Endothelial cell of umbilical vein (primary cell): ENCODE measurements at regions of chr15 and their contacts with region 1.

Region 1: GRCh38 chr15:71103102-71103676 is 12.1 kb upstream of the THSD4 start:
- DNase-seq: peak; percentile 38
- H3K4me3 ChIP-seq: no peak overlapping the region
- H3K27ac ChIP-seq: no peak overlapping the region
- H3K4me1 ChIP-seq: no peaks in the 10 kb centered on the region
- H3K27me3 ChIP-seq: no peaks in the 10 kb centered on the region
- CTCF ChIP-seq: peak; percentile 48 to 78
- POLR2A ChIP-seq: no peak

Region 2: DNA sequence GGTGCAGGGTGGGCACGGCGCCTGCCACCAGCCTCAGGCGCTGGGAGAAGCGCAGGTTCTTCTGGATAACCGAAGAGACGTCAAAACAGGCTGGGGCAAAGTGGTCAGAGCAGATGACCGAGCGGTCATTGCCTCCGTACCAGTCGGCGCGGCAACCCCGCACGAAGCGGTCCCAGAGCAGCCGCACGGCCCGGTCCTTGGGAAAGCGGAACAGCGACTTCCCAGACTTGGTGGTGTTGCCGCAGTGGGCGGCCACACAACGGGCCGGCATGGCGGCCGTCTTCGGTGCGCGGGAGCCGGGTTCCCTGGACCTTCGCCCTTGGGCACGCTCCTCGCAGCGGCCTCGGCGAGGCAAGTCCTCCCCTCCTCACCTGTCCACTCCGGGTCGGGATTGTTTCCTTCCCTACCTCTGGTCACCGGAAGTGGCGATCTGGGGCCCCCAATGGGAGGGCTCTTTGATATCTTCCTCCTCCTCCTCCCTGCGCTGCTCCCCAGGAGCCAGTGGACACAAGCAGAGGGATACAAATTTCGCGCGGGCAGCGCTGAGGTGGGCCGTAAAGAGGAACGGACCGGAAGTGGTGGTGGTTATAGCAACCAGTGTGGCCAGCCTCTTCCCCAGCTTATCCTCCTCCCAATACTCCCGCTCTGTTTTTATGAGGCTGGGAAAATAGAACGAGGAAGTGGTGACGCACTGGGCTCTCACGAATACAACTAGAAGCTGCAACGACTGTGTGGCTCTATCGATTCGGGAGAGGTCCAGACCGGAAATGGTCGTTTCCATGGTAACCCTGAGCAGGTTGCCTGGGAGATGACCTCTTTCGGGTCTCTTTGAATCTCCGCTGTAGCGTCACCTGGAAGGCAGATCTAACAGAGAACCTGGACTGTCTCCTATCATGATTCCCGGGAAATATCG is 210.9 kb before region 1 on chr15 and contains the starts of genes LRRC49 and THAP10:
- CTCF ChIA-PET with region 1: interaction called, 14 read pairs
- POLR2A ChIA-PET with region 1: no interaction called
- dilution Hi-C with region 1: no loop called
- intact Hi-C with region 1: loop called (anchors 2 kb)
- DNase-seq: peak; percentile 98
- H3K4me3 ChIP-seq: peak within 1 kb of the TSS; percentile 47 to 81 (median 69)
- H3K27ac ChIP-seq: peak within 1 kb of the TSS; percentile 86
- H3K4me1 ChIP-seq: peaks cover 17% of the 10 kb centered on the region
- H3K27me3 ChIP-seq: no peaks in the 10 kb centered on the region
- CTCF ChIP-seq: no peak
- POLR2A ChIP-seq: no peak
- total RNA-seq, gene LRRC49: 6.6 and 7.4 TPM in 2 replicates
- total RNA-seq, gene THAP10: 2.7 and 4.0 TPM in 2 replicates

Region 3: GRCh38 chr15:70974004-70974832 is 129.0 kb before region 1 on chr15:
- CTCF ChIA-PET with region 1: interaction called, 34 read pairs
- POLR2A ChIA-PET with region 1: no interaction called
- dilution Hi-C with region 1: no loop called
- intact Hi-C with region 1: loop called (anchors 2 kb)
- DNase-seq: peak; percentile 66
- H3K4me3 ChIP-seq: no peak overlapping the region
- H3K27ac ChIP-seq: no peak overlapping the region
- H3K4me1 ChIP-seq: no peaks in the 10 kb centered on the region
- H3K27me3 ChIP-seq: no peaks in the 10 kb centered on the region
- CTCF ChIP-seq: peak in 1 of 2 donors; percentile 38
- POLR2A ChIP-seq: no peak

Region 4: GRCh38 chr15:71060983-71061382 is 42.2 kb before region 1 on chr15:
- CTCF ChIA-PET with region 1: no interaction called
- POLR2A ChIA-PET with region 1: no interaction called
- dilution Hi-C with region 1: no loop called
- intact Hi-C with region 1: no loop called
- DNase-seq: no peak
- H3K4me3 ChIP-seq: no peak overlapping the region
- H3K27ac ChIP-seq: no peak overlapping the region
- H3K4me1 ChIP-seq: no peaks in the 10 kb centered on the region
- H3K27me3 ChIP-seq: no peaks in the 10 kb centered on the region
- CTCF ChIP-seq: no peak
- POLR2A ChIP-seq: no peak

Region 5: DNA sequence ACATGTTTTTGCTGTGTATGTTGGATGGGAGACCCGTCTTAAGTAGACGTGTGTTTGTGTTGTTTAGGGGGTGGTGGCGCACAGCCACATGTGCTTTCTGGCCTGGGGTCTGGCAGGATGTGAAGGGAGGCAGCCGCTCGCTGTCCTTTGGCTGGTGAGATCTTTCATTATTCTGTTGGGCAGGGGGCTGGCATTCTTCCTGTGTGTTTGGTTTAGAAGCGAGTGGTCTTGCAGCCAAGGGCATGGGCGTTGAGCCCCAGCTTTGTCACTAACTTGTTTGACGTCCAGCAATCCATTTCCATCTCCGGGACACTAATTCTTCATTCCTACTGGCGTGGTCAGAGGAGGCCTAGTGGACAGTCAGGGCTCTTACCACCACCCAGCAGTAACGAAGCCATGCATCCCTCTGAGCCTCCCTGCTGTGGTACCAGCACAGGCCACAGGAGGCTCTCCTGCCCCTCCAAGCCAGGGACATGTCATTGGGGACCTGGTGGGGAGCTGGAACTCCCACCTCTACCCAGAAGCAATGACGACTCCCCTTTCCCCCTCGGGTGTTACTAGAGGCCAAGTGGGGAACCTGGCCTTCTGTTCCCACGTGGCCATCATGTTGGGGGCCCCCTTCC is 22.8 kb after region 1 on chr15:
- CTCF ChIA-PET with region 1: no interaction called
- POLR2A ChIA-PET with region 1: no interaction called
- dilution Hi-C with region 1: no loop called
- intact Hi-C with region 1: no loop called
- DNase-seq: no peak
- H3K4me3 ChIP-seq: no peak overlapping the region
- H3K27ac ChIP-seq: no peak overlapping the region
- H3K4me1 ChIP-seq: peaks cover 13% of the 10 kb centered on the region
- H3K27me3 ChIP-seq: no peaks in the 10 kb centered on the region
- CTCF ChIP-seq: peak; percentile 20 to 40
- POLR2A ChIP-seq: no peak